Esophagus muscularis mucosa (tissue), 4 donors: ENCODE measurements at regions of chr5 and their contacts with region 1.

Region 1: DNA sequence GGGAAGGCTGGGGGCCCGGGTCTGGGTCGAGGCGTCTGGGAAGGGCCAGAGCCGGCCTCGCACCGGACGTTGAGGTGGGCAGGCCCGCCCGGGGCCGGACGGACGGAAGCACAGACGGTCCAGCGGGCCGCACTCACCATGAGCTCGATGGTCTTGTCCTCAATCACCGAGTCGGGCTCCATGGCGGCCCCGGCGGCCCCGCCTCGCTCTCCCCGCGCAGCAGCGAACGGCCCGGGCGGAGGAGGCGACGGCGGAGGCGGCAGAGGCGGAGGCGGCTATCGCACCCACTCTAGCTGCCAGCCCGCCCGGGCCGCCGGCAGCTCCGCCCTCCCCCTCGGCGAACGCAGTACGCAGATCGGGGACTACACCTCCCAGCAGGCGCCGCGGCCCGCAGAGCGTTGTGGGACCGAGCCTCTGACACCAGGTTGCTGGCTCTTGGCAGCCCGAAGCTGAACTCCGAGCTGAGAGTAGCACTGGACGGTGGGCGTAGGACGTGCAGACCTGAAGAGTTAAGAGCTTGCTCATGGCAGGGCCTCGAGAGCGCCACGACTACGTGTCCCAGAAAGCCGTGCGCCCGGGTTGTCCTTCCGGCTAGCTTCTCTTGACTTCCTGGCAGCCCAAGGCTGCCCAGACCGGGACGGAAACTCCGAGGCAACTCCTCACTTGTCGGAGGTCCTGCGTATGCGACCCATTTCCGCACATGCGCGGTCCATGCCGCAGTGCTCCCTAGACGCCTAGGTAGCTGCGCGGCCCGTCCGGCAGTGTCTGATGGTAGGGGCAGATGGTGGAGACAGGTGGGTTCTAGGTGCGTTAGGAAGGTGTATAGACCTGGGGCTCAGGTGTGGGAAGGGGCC is at the start of gene FBXW11:
- DNase-seq: peak; percentile 97
- H3K4me3 ChIP-seq: peak within 1 kb of the TSS; percentile 89 to 97 (median 92)
- H3K27ac ChIP-seq: peak within 1 kb of the TSS; percentile 91 to 98 (median 96)
- H3K4me1 ChIP-seq: peaks cover 45 to 54% (median 47%) of the 10 kb centered on the region in 4 donors
- H3K27me3 ChIP-seq: no peaks in the 10 kb centered on the region
- CTCF ChIP-seq: no peak
- EP300 ChIP-seq: no peak
- POLR2A ChIP-seq: peak; percentile 74
- total RNA-seq, gene FBXW11: 60.8 to 75.6 (median 66.3) TPM

Region 2: GRCh38 chr5:171898386-171898785 is 108.2 kb before region 1 on chr5:
- intact Hi-C with region 1: no loop called
- DNase-seq: no peak
- H3K4me3 ChIP-seq: no peak overlapping the region
- H3K27ac ChIP-seq: no peak overlapping the region
- H3K4me1 ChIP-seq: peaks cover 0 to 3% (median 0%) of the 10 kb centered on the region in 4 donors
- H3K27me3 ChIP-seq: no peaks in the 10 kb centered on the region
- CTCF ChIP-seq: no peak
- EP300 ChIP-seq: no peak
- POLR2A ChIP-seq: no peak

Region 3: DNA sequence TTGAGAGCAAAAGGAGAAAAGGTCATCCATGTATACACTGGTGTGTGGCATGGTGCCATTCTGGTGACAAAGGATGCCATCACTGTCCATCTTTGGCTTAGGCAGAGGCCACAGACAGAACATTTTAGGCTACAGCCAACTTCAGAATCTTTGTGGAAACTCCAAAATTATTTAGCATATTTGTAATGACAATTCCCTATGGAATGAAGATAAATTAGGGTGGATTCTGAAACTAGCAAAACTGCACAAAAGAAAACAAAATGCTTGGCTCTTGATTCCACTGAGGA is 92.6 kb before region 1 on chr5:
- intact Hi-C with region 1: loop called (anchors 2 kb)
- DNase-seq: no peak
- H3K4me3 ChIP-seq: no peak overlapping the region
- H3K27ac ChIP-seq: no peak overlapping the region
- H3K4me1 ChIP-seq: peaks cover 19 to 51% (median 38%) of the 10 kb centered on the region in 4 donors
- H3K27me3 ChIP-seq: no peaks in the 10 kb centered on the region
- CTCF ChIP-seq: no peak
- EP300 ChIP-seq: no peak
- POLR2A ChIP-seq: no peak

Region 4: DNA sequence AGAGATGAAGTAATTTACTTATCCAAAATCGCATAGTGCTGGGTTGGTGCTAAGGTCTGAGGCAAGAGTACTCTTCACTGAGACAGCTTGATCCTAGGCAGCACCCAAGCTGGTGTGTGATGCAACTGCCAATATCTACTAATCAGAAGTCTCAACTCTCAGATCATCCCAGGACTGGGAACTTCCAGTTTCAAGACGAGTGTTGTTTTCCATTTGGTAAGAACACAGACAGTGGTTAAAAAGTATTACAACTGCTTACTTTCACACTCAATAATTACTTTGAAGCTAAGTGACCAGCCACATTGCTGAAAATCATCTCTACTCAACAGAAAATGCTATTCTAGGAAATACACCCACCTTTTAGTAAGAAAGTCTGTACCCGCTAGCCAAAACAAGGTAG is 45.4 kb before region 1 on chr5:
- intact Hi-C with region 1: loop called (anchors 5 kb)
- DNase-seq: no peak
- H3K4me3 ChIP-seq: no peak overlapping the region
- H3K27ac ChIP-seq: peak overlapping the region; percentile 57 to 68 (median 60)
- H3K4me1 ChIP-seq: peaks cover 89 to 97% (median 93%) of the 10 kb centered on the region in 4 donors
- H3K27me3 ChIP-seq: no peaks in the 10 kb centered on the region
- CTCF ChIP-seq: no peak
- EP300 ChIP-seq: no peak
- POLR2A ChIP-seq: no peak

Region 5: DNA sequence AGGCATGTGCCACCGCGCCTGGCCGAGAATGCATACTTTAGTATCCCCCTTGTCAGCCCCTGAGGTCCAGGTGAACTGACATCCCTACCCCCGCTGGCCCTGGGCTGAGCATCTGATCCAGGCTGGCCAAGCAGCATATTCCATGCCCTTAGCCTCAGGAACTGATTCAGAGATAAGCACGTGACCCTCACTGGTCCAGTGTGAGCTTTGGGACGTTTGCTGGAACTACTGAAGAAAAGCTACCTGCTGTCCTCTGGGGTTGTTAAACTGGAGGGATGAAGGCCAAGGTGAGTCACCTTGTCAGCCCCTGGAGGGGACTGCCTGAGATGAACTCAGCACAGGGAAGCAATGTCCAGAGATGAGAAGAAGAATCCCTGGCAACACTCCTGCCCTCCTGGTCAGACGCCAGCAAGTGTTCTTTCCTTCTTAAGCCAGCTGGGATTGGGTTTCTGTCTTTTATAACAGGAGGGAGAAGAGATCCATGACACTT is 59.0 kb after region 1 on chr5:
- intact Hi-C with region 1: no loop called
- DNase-seq: no peak
- H3K4me3 ChIP-seq: no peak overlapping the region
- H3K27ac ChIP-seq: peak overlapping the region; percentile 20 to 42 (median 35)
- H3K4me1 ChIP-seq: peaks cover 0 to 18% (median 14%) of the 10 kb centered on the region in 4 donors
- H3K27me3 ChIP-seq: no peaks in the 10 kb centered on the region
- CTCF ChIP-seq: no peak
- EP300 ChIP-seq: no peak
- POLR2A ChIP-seq: no peak

Region 6: DNA sequence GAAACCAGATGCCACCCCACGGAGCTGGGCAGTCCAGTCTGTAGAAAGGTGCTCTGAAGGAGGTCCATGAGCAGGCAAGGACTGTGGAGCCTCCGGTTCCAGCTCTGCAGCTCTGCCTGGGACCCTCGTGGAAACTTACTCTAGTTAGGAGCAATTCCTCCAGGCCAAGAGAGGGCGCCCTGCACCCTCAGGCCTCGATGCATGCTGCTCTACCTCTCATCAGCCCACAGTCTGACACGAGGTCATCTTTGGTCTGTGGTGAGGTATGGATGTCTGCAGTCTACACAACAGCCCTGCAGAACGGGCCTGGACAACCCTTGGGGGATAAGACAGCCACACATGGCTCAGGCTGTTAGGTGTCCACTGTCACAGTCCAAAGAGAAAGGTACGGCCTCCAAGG is 327.6 kb after region 1 on chr5:
- intact Hi-C with region 1: no loop called
- DNase-seq: no peak
- H3K4me3 ChIP-seq: no peak overlapping the region
- H3K27ac ChIP-seq: no peak overlapping the region
- H3K4me1 ChIP-seq: peaks cover 0 to 16% (median 7%) of the 10 kb centered on the region in 4 donors
- H3K27me3 ChIP-seq: no peaks in the 10 kb centered on the region
- CTCF ChIP-seq: peak in 1 of 3 experiments; percentile 2
- EP300 ChIP-seq: no peak
- POLR2A ChIP-seq: no peak